ENCODE measurements at regions of chr1 and their contacts with region 1.

Region 1: GRCh38 chr1:182604169-182605164 is at the start of gene RGS16:
- DNase-seq: peak; percentile 90 to 98 (median 95)
- ATAC-seq: peak; percentile 96 to 98 (median 98)
- H3K4me3 ChIP-seq: peak within 1 kb of the TSS; percentile 19 to 54 (median 39)
- H3K27ac ChIP-seq: no peak within 1 kb of the TSS
- H3K4me1 ChIP-seq: peaks cover 0 to 13% (median 0%) of the 10 kb centered on the region in 3 donors
- H3K27me3 ChIP-seq: no peaks in the 10 kb centered on the region
- CTCF ChIP-seq: no peak
- total RNA-seq, gene RGS16: 1.8 to 4.4 (median 2.7) TPM

Region 2: DNA sequence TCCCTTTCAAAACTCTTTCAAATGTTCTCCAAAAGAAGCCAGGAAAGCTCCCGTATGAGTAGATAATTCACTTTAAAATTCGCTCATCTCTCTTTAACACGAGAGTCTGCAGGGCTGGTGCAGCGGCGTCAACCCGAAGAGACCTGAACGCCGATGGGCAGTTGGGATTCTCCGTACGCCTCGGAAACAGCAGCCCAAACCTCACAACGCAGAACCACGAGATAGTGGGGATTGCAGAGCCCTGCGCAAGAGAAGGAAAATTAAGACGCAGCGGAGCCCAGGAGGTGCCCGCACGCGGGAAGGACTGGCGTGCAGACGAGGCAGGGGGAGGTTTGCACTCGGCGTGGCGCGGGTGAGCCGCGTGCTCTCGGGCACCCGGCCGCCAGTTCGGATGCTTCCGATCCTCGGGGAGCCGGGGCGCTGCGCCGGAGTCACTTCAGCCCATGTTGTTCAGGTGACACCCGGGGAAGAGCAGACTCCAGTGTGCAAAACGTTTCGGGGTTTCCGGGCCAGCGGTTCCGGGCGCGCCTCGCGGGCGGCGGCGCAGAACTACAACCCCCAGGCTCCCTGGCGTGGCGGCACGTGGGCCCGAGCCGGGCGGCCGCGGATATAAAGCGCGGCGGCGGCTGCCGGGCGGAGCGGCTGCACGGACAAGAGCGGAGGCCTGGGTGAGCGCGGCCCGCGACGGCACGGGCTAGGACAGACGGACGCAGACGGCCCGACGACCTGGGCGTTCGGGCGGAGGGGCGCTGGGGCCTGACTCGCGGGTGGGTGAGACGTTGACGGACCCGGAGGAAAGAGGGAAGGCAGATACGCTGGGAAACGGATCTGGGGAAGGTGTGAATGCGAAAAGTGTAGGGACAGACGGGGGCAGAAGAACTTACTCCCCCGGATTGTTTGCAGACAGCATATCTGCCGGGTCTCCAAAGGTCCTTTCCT is 184.9 kb after region 1 on chr1 and contains the start of gene NPL:
- intact Hi-C with region 1: loop called in 2 of 3 experiments (anchors 5 to 10 kb)
- DNase-seq: peak; percentile 75 to 94 (median 82)
- ATAC-seq: peak; percentile 95 to 99 (median 98)
- H3K4me3 ChIP-seq: peak within 1 kb of the TSS; percentile 26 to 63 (median 49)
- H3K27ac ChIP-seq: peak within 1 kb of the TSS in 1 of 4 donors; percentile 20
- H3K4me1 ChIP-seq: no peaks in the 10 kb centered on the region
- H3K27me3 ChIP-seq: no peaks in the 10 kb centered on the region
- CTCF ChIP-seq: no peak
- total RNA-seq, gene NPL: 1.2 to 9.7 (median 3.3) TPM

Measured in pancreas (tissue), 10 donors.